Activated T-helper 1 cell treated with anti-CD3 and anti-CD28 coated beads, Interleukin-12 subunit alpha, Interleukin-12 subunit beta, Interleukin-2, Interleukin-4 antibody, amounts not matched to agents 30 ng/mL and 10 ng/mL and 1 ng/mL, durations not matched to agents 14 hours and 24 hours and 36 hours (primary cell): ENCODE measurements at regions of chr11 and their contacts with region 1.

Region 1: GRCh38 chr11:125592305-125593112 is at the start of gene STT3A:
- DNase-seq: peak; percentile 98
- H3K4me3 Mint-ChIP-seq: peak within 1 kb of the TSS; percentile 98
- H3K27ac Mint-ChIP-seq: peak within 1 kb of the TSS; percentile 94
- H3K4me1 Mint-ChIP-seq: peaks cover 50% of the 10 kb centered on the region
- H3K27me3 Mint-ChIP-seq: no peaks in the 10 kb centered on the region
- total RNA-seq, gene STT3A: 164 and 171 TPM in 2 replicates

Region 2: DNA sequence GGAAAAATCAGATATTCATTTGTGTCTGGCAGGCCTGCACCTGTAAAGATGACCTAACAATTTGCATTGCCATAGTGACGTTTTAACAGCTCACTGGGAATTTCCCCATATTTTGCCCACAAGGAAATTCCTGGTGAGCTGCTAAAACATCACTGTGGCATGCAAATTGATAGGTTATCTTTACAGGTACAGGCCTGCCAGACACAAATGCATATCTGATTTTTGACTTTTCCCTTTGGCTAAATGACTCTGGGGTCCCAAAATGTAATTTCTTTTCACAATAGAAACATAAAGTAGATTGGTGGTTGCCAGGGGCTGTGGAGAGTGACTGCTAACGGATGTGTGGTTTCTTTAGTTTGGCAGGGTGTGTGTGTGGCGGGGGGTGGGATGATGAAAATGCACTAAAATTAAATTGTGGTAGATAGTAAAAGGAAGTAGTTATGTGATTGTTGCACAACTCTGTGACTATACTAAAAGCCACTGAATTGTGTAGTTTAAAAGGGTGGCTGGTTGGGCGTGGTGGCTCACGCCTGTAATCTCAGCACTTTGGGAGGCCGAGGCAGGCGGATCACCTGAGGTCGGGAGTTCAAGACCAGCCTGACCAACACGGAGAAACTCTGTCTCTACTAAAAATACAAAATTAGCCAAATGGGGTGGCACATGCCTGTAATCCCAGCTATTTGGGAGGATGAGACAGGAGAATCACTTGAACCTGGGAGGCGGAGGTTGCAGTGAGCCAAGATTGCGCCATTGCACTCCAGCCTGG is 78.0 kb before region 1 on chr11:
- intact Hi-C with region 1: loop called (anchors 1 kb)
- DNase-seq: peak; percentile 55
- H3K4me3 Mint-ChIP-seq: peak overlapping the region; percentile 8
- H3K27ac Mint-ChIP-seq: peak overlapping the region; percentile 83
- H3K4me1 Mint-ChIP-seq: peaks cover 57% of the 10 kb centered on the region
- H3K27me3 Mint-ChIP-seq: no peaks in the 10 kb centered on the region

Region 3: GRCh38 chr11:125902927-125903710 is 310.6 kb after region 1 on chr11 and contains the start of gene PUS3:
- intact Hi-C with region 1: loop called (anchors 1 kb)
- DNase-seq: peak; percentile 85
- H3K4me3 Mint-ChIP-seq: peak within 1 kb of the TSS; percentile 98
- H3K27ac Mint-ChIP-seq: peak within 1 kb of the TSS; percentile 88
- H3K4me1 Mint-ChIP-seq: peaks cover 28% of the 10 kb centered on the region
- H3K27me3 Mint-ChIP-seq: peaks cover 34% of the 10 kb centered on the region
- total RNA-seq, gene PUS3: 16.5 and 23.6 TPM in 2 replicates